Stomach (tissue), 19 donors: ENCODE measurements at regions of chr12 and their contacts with region 1.

Region 1: DNA sequence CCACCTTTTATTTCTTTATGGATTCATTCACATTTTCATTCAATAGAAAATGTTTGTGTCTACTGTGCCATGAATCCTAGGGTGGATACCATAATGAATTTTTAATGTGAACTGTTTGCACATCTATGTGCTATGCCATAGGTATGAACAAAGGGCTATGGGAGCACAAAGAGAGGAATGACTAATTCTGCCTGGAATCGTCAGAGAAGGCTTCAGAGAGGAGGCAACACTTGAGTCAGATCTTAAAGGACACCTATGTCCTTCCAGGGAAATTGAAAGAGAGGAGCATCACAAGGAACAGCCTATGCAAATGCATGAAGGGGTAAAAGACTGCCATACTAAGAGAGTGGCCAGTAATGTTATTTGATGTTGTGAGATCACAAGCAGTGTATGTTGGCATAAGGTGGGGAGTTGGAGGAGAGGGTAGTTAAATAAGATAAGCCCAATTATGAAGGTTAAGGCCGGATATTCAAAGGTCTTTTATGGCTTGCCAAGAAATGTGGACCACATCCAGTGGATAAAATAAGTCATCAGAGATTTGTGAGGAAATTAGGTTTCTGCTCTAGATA is 246.7 kb downstream of the GRIN2B start:
- DNase-seq: no peak
- H3K4me3 ChIP-seq: no peak overlapping the region
- H3K27ac ChIP-seq: no peak overlapping the region
- H3K4me1 ChIP-seq: peaks cover 0 to under 1% (median 0%) of the 10 kb centered on the region in 4 donors
- H3K27me3 ChIP-seq: no peaks in the 10 kb centered on the region
- CTCF ChIP-seq: no peak
- EP300 ChIP-seq: no peak
- POLR2A ChIP-seq: no peak

Region 2: DNA sequence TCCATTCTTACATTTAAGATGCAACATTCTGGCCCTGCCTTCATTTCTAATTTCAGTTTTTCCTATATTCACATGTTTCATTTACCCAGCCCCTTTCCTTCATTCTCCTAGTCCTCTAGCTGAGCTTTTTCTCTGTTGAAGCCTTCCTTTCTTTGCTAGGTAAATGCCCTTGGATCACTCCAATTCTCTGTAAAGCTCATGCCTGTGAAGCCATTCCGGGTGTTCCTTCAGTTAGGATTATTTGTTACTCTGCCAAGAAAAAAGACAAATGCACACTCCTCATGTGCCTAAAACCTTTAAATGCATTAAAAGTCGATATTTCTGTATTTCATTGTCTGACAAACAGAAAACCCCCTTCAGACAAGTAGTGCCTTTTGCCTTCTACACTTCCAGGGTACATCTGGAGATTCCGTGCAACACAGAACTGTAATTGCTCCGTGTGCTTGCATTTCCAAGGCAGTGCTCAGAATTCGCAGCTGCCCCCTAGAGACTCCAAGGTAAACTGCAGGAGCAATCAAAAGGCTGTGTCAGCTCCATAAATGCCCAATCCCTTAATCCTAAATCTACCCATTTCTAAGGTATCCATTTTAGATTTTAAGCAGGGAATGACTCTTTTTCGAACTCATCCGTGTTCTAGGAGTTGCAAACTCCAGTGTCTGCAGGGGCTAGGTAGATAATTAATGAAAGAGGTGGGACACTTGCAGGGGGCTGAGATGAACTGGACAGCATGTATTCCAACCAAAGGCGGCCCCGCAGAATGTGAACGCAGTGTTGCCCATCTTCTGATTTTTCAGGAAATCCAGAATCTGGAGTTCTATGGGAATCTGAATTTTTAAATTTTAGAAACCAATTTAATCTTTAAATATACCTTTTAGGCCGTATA is 73.4 kb before region 1 on chr12:
- intact Hi-C with region 1: no loop called
- DNase-seq: peak; percentile 61 to 78
- H3K4me3 ChIP-seq: no peak overlapping the region
- H3K27ac ChIP-seq: no peak overlapping the region
- H3K4me1 ChIP-seq: peaks cover 0 to 4% (median 0%) of the 10 kb centered on the region in 4 donors
- H3K27me3 ChIP-seq: peaks cover 0 to 4% (median 0%) of the 10 kb centered on the region in 3 donors
- CTCF ChIP-seq: peak in 5 of 7 experiments; percentile 36 to 84 (median 73)
- EP300 ChIP-seq: no peak
- POLR2A ChIP-seq: no peak

Region 3: GRCh38 chr12:14167005-14167628 is 432.4 kb after region 1 on chr12:
- intact Hi-C with region 1: loop called (anchors 10 kb)
- DNase-seq: peak; percentile 36 to 73
- H3K4me3 ChIP-seq: no peak overlapping the region
- H3K27ac ChIP-seq: no peak overlapping the region
- H3K4me1 ChIP-seq: no peaks in the 10 kb centered on the region
- H3K27me3 ChIP-seq: no peaks in the 10 kb centered on the region
- CTCF ChIP-seq: peak in 5 of 7 experiments; percentile 47 to 88 (median 83)
- EP300 ChIP-seq: no peak
- POLR2A ChIP-seq: no peak